CD8-positive, alpha-beta memory T cell (primary cell): ENCODE measurements at regions of chr12 and their contacts with region 1.

Region 1: DNA sequence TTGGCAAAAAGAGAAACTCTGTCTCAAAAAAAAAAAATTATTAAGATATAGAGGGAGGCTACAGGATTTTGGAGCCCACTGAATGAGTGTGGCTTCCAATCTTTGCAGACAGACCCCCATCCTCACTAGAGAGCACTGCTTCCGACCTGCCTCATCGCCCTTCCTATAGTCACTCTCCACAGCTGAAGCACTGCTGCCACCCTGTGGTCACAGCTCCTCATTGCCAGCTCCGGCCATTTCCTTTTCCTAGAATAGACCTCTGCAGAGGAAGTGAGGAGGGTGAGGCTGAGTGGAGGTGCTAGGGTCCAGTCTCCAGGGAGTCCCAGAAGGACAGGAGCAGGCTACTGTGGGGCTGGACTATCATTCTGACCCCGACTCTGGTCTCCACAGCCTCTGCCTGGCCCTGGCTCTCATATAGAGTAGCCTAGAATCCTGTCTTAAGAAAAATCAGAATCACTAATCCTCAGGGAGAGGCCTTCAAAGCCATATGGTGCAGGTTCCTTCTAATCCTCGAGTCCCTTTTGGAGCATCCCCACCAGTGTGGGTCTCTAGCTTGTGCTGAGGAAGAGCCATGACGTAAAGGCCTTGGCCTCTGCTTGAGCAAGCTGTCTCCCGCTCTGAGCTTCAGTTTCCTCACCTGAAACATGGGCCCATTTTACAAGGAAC is 1.4 kb upstream of the NPFF start:
- DNase-seq: peak; percentile 63 to 85 (median 75)
- H3K4me3 ChIP-seq: no peak overlapping the region
- H3K4me3 Mint-ChIP-seq: peak overlapping the region in 2 of 7 donors; percentile 7 to 40
- H3K27ac ChIP-seq: no peak overlapping the region
- H3K27ac Mint-ChIP-seq: peak overlapping the region in 7 of 8 donors; percentile 0 to 87 (median 68)
- H3K4me1 ChIP-seq: peaks cover 7% of the 10 kb centered on the region
- H3K4me1 Mint-ChIP-seq: peaks cover 4 to 10% (median 9%) of the 10 kb centered on the region in 3 donors
- H3K27me3 ChIP-seq: no peaks in the 10 kb centered on the region
- H3K27me3 Mint-ChIP-seq: no peaks in the 10 kb centered on the region

Region 2: GRCh38 chr12:53352331-53353256 is 156.1 kb before region 1 on chr12:
- CTCF ChIA-PET with region 1: interaction called, 57 read pairs
- POLR2A ChIA-PET with region 1: interaction called, 4 read pairs
- DNase-seq: peak; percentile 71 to 89 (median 78)
- H3K4me3 ChIP-seq: no peak overlapping the region
- H3K4me3 Mint-ChIP-seq: no peak overlapping the region
- H3K27ac ChIP-seq: no peak overlapping the region
- H3K27ac Mint-ChIP-seq: peak overlapping the region in 3 of 8 donors; percentile 2 to 38 (median 12)
- H3K4me1 ChIP-seq: peaks cover 6% of the 10 kb centered on the region
- H3K4me1 Mint-ChIP-seq: peaks cover 6 to 7% (median 6%) of the 10 kb centered on the region in 3 donors
- H3K27me3 ChIP-seq: no peaks in the 10 kb centered on the region
- H3K27me3 Mint-ChIP-seq: no peaks in the 10 kb centered on the region

Region 3: DNA sequence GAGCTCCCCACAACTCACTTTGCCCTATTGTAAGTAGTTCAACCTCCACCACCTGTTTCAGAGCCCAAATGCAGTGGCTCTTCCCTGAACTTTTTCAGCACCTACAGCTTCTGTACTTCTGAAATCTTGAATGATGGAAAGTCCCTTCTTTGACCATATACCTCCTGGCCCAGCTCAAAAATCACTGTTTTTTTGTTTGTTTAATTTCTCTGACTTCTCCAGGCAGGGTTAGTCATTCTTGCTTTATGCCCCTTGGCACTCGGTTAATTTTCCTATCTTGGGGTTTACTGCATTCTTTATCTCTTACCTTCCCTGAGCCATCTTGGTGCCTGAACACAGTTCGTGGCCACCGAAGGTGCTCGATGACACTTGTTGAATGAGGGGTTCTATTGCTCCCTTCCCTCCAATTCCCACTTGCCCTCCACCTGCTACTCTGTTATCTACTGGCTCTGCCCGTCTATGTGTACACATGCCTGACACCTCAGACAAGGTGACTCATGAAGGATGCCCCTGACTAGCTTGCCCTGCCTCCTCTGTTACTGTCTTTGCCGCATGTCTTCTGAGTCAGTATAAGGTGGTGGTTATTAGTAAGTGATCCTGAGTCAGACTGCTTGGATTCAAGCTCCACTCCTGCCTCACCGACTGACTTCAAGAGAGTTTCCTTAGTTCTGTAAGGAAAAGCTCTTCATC is 80.6 kb before region 1 on chr12:
- CTCF ChIA-PET with region 1: interaction called, 29 read pairs
- POLR2A ChIA-PET with region 1: no interaction called
- DNase-seq: no peak
- H3K4me3 ChIP-seq: no peak overlapping the region
- H3K4me3 Mint-ChIP-seq: no peak overlapping the region
- H3K27ac ChIP-seq: no peak overlapping the region
- H3K27ac Mint-ChIP-seq: peak overlapping the region in 2 of 8 donors; percentile 15 to 19
- H3K4me1 ChIP-seq: no peaks in the 10 kb centered on the region
- H3K4me1 Mint-ChIP-seq: no peaks in the 10 kb centered on the region
- H3K27me3 ChIP-seq: no peaks in the 10 kb centered on the region
- H3K27me3 Mint-ChIP-seq: no peaks in the 10 kb centered on the region

Region 4: GRCh38 chr12:53476769-53477209 is 31.9 kb before region 1 on chr12:
- CTCF ChIA-PET with region 1: interaction called, 23 read pairs
- POLR2A ChIA-PET with region 1: interaction called, 9 read pairs
- DNase-seq: peak in 1 of 5 donors; percentile 10
- H3K4me3 ChIP-seq: no peak overlapping the region
- H3K4me3 Mint-ChIP-seq: no peak overlapping the region
- H3K27ac ChIP-seq: no peak overlapping the region
- H3K27ac Mint-ChIP-seq: peak overlapping the region in 7 of 8 donors; percentile 21 to 86 (median 67)
- H3K4me1 ChIP-seq: peaks cover 5% of the 10 kb centered on the region
- H3K4me1 Mint-ChIP-seq: peaks cover 36 to 59% (median 46%) of the 10 kb centered on the region in 3 donors
- H3K27me3 ChIP-seq: no peaks in the 10 kb centered on the region
- H3K27me3 Mint-ChIP-seq: no peaks in the 10 kb centered on the region

Region 5: GRCh38 chr12:53492830-53493611 is 15.6 kb before region 1 on chr12:
- CTCF ChIA-PET with region 1: interaction called, 13 read pairs
- POLR2A ChIA-PET with region 1: no interaction called
- DNase-seq: peak; percentile 79 to 93 (median 82)
- H3K4me3 ChIP-seq: peak overlapping the region; percentile 67
- H3K4me3 Mint-ChIP-seq: peak overlapping the region; percentile 87 to 96 (median 92)
- H3K27ac ChIP-seq: peak overlapping the region; percentile 51
- H3K27ac Mint-ChIP-seq: peak overlapping the region; percentile 85 to 98 (median 94)
- H3K4me1 ChIP-seq: peaks cover 16% of the 10 kb centered on the region
- H3K4me1 Mint-ChIP-seq: peaks cover 21 to 54% (median 39%) of the 10 kb centered on the region in 3 donors
- H3K27me3 ChIP-seq: no peaks in the 10 kb centered on the region
- H3K27me3 Mint-ChIP-seq: no peaks in the 10 kb centered on the region